ENCODE measurements at regions of chr9 and their contacts with region 1.

Region 1: DNA sequence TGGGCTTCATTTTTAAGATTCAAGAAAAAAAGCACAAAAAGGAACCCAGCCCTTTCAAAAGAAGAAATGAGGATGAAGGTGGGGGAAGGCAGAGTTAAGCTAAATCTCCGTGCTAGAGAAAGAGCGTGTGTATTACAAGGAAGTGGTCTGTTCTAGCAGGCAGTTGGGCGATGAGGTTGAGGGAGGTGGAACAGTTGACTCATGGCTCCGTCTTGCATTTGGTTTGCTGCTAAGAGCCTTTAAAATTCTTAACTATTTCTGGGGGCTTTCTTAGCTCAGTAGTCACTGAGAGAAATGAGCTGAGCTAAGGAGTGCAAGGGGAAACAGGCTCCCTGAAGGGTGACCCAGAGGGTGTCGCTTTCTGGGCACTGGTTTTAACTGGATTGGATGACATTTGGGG is 117.4 kb downstream of the GCNT1 start:
- DNase-seq: peak; percentile 87
- ATAC-seq: peak; percentile 94
- H3K4me3 Mint-ChIP-seq: no peak overlapping the region
- H3K27ac Mint-ChIP-seq: peak overlapping the region; percentile 48
- H3K4me1 Mint-ChIP-seq: peaks cover 16% of the 10 kb centered on the region
- H3K27me3 Mint-ChIP-seq: peaks cover 30% of the 10 kb centered on the region

Region 2: GRCh38 chr9:76562511-76562911 is 13.8 kb before region 1 on chr9:
- CTCF ChIA-PET with region 1: interaction called, 6 read pairs
- POLR2A ChIA-PET with region 1: no interaction called
- intact Hi-C with region 1: loop called in 1 of 2 experiments (anchors 2 kb)
- DNase-seq: no peak
- ATAC-seq: peak; percentile 91
- H3K4me3 Mint-ChIP-seq: no peak overlapping the region
- H3K27ac Mint-ChIP-seq: no peak overlapping the region
- H3K4me1 Mint-ChIP-seq: peaks cover 19% of the 10 kb centered on the region
- H3K27me3 Mint-ChIP-seq: peaks cover 15% of the 10 kb centered on the region

Region 3: GRCh38 chr9:76677481-76678055 is 101.2 kb after region 1 on chr9:
- CTCF ChIA-PET with region 1: no interaction called
- POLR2A ChIA-PET with region 1: no interaction called
- intact Hi-C with region 1: no loop called
- DNase-seq: no peak
- ATAC-seq: no peak
- H3K4me3 Mint-ChIP-seq: no peak overlapping the region
- H3K27ac Mint-ChIP-seq: no peak overlapping the region
- H3K4me1 Mint-ChIP-seq: peaks cover 10% of the 10 kb centered on the region
- H3K27me3 Mint-ChIP-seq: no peaks in the 10 kb centered on the region

Region 4: GRCh38 chr9:77707383-77708063 is 1131.2 kb after region 1 on chr9:
- CTCF ChIA-PET with region 1: no interaction called
- POLR2A ChIA-PET with region 1: no interaction called
- intact Hi-C with region 1: no loop called
- DNase-seq: no peak
- ATAC-seq: no peak
- H3K4me3 Mint-ChIP-seq: no peak overlapping the region
- H3K27ac Mint-ChIP-seq: no peak overlapping the region
- H3K4me1 Mint-ChIP-seq: peaks cover 12% of the 10 kb centered on the region
- H3K27me3 Mint-ChIP-seq: peaks cover 2% of the 10 kb centered on the region